Activated T-helper 2 cell treated with anti-CD3 and anti-CD28 coated beads, Interferon-gamma antibody, Interleukin-2, Interleukin-4, amounts not matched to agents 10 μg/mL and 5 μg/mL and 100 μg/mL, durations not matched to agents 14 hours and 24 hours and 36 hours (primary cell): ENCODE measurements at regions of chr1 and their contacts with region 1.

Region 1: DNA sequence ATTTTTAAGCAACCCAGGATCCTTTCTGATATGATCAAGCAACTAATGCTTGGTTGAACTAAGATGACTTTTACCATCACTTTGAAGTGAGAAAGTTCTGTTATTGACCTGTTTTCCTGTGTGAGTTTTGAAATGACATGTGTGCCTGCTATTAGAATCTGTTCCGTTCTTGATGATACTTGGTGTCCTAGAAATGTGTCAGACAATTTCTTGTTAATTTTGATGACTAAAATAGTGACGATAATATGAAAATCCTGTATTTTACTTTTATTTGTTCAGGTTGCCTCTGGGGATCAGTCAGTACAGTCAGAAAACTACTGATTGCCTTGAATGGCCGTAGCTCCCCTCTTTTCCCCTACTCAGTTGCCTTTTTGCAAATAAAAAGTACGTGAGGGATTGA is 228.0 kb downstream of the RYR2 start:
- DNase-seq: no peak
- H3K4me3 Mint-ChIP-seq: peak overlapping the region; percentile 75
- H3K27ac Mint-ChIP-seq: peak overlapping the region; percentile 84
- H3K4me1 Mint-ChIP-seq: peaks cover 37% of the 10 kb centered on the region
- H3K27me3 Mint-ChIP-seq: no peaks in the 10 kb centered on the region

Region 2: GRCh38 chr1:237249120-237249519 is 20.8 kb before region 1 on chr1:
- intact Hi-C with region 1: loop called (anchors 1 kb)
- DNase-seq: no peak
- H3K4me3 Mint-ChIP-seq: no peak overlapping the region
- H3K27ac Mint-ChIP-seq: peak overlapping the region; percentile 54
- H3K4me1 Mint-ChIP-seq: peaks cover 2% of the 10 kb centered on the region
- H3K27me3 Mint-ChIP-seq: no peaks in the 10 kb centered on the region

Region 3: DNA sequence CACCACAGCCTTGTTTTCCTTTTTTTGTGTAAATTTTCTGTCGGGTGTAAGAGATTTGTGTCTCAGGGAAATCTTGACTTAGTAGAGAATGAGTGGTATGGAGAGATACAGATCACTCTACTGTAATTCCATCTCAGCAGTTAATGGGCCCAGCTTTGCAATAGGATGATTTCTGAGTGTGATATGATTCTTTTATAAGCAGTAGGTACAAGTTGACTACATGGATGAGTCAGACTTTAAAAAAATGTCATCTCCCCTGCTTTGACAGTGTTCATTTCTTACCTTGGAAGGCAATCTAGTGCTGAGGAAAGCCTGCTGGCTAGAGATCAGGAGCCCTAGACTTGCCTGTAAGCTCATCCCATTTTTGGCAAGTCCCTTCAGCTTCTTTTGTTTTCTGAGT is 34.0 kb after region 1 on chr1:
- intact Hi-C with region 1: loop called (anchors 1 kb)
- DNase-seq: no peak
- H3K4me3 Mint-ChIP-seq: no peak overlapping the region
- H3K27ac Mint-ChIP-seq: peak overlapping the region; percentile 21
- H3K4me1 Mint-ChIP-seq: peaks cover 16% of the 10 kb centered on the region
- H3K27me3 Mint-ChIP-seq: no peaks in the 10 kb centered on the region

Region 4: GRCh38 chr1:237341391-237341790 is 71.5 kb after region 1 on chr1:
- intact Hi-C with region 1: loop called (anchors 2 kb)
- DNase-seq: no peak
- H3K4me3 Mint-ChIP-seq: no peak overlapping the region
- H3K27ac Mint-ChIP-seq: no peak overlapping the region
- H3K4me1 Mint-ChIP-seq: peaks cover 3% of the 10 kb centered on the region
- H3K27me3 Mint-ChIP-seq: no peaks in the 10 kb centered on the region

Region 5: GRCh38 chr1:237411621-237412020 is 141.7 kb after region 1 on chr1:
- intact Hi-C with region 1: loop called (anchors 2 kb)
- DNase-seq: peak; percentile 15
- H3K4me3 Mint-ChIP-seq: no peak overlapping the region
- H3K27ac Mint-ChIP-seq: peak overlapping the region; percentile 65
- H3K4me1 Mint-ChIP-seq: peaks cover 11% of the 10 kb centered on the region
- H3K27me3 Mint-ChIP-seq: peaks cover 2% of the 10 kb centered on the region

Region 6: DNA sequence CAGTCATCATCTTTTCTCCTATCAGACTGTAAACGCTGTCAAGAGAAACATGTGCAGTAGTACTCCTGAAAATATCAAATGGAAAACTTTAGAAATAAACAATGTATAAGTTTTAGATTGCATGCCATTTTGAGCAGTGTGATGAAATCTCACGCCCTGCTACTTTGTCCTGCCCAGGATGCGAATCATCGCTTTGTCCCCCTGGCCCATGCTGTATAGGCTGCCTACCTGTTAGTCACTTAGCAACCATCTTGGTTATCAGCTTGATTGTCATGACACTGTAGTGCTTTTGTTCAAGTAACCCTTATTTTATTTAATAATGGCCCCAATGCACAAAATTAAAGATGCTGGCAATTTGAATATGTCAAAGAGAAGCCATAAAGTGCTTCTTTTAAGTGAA is 257.8 kb after region 1 on chr1:
- intact Hi-C with region 1: no loop called
- DNase-seq: no peak
- H3K4me3 Mint-ChIP-seq: no peak overlapping the region
- H3K27ac Mint-ChIP-seq: no peak overlapping the region
- H3K4me1 Mint-ChIP-seq: no peaks in the 10 kb centered on the region
- H3K27me3 Mint-ChIP-seq: no peaks in the 10 kb centered on the region